Left cardiac atrium (tissue), 4 donors: ENCODE measurements at regions of chr4 and their contacts with region 1.

Region 1: GRCh38 chr4:47562297-47562696 is 77.2 kb downstream of the ATP10D start:
- DNase-seq: no peak
- ATAC-seq: no peak

Region 2: GRCh38 chr4:47463235-47463956 is 98.9 kb before region 1 on chr4 and contains the start of gene COMMD8:
- intact Hi-C with region 1: loop called in 1 of 2 experiments (anchors 10 kb)
- DNase-seq: peak; percentile 98
- ATAC-seq: peak; percentile 99
- total RNA-seq, gene COMMD8: 14.2 to 15.3 TPM